Adrenal gland (tissue), 19 donors: ENCODE measurements at regions of chr19 and their contacts with region 1.

Region 1: GRCh38 chr19:46076951-46077816 is 36.4 kb upstream of the IGFL4 start:
- DNase-seq: peak; percentile 56 to 76 (median 71)
- H3K4me3 ChIP-seq: peak overlapping the region in 1 of 4 donors; percentile 36
- H3K27ac ChIP-seq: no peak overlapping the region
- H3K4me1 ChIP-seq: peaks cover 0 to 5% of the 10 kb centered on the region in 2 donors
- H3K27me3 ChIP-seq: peaks cover 33% of the 10 kb centered on the region
- CTCF ChIP-seq: peak; percentile 69 to 93 (median 88)
- POLR2A ChIP-seq: no peak

Region 2: DNA sequence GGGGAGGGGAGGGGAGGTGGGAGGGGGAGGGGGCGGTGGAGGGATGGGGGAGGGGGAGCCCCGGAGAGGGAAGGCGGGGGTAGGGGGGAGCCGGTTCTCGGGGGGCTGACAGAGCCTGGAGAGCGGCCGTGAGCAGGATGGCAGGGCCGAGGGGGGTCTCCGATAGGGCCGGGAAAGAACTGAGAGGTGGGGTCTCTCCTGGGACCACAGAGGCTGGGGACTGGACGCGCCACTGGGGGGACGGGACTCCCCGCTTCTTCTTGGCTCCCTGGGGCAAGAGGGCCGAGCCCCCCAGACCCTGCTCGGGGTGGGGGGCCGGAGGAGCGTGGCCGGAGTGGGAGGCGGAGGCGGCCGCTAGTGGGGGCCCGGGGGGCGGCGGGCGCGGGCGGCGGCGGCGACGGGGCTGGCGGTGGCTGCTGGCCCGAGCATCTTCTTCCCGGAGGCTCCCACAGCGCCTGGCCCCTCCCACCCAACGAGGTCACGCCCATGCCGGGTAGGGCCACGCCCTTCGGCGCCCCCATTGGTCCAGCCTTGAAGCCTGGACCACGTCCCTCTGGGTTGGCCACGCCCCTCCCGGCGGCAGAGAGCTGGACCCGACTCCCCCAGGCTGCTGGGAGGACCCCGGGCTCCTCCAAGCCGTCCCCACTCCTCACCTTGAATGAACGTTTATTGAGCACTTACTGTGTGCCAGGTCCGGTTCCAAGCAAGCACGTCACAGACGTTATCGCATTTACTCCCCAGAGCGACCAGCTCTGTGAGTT is 103.4 kb before region 1 on chr19 and contains the start of gene NOVA2:
- intact Hi-C with region 1: no loop called
- DNase-seq: peak; percentile 58 to 92 (median 67)
- H3K4me3 ChIP-seq: peak within 1 kb of the TSS in 1 of 4 donors; percentile 51
- H3K27ac ChIP-seq: peak within 1 kb of the TSS in 1 of 5 donors; percentile 40
- H3K4me1 ChIP-seq: no peaks in the 10 kb centered on the region
- H3K27me3 ChIP-seq: peaks cover 22% of the 10 kb centered on the region
- CTCF ChIP-seq: no peak
- POLR2A ChIP-seq: no peak
- total RNA-seq, gene NOVA2: 0.54 to 6.7 (median 2.2) TPM

Region 3: GRCh38 chr19:46021531-46022041 is 55.6 kb before region 1 on chr19:
- intact Hi-C with region 1: loop called in 1 of 2 experiments (anchors 10 kb)
- DNase-seq: peak in 1 of 7 donors; percentile 38
- H3K4me3 ChIP-seq: no peak overlapping the region
- H3K27ac ChIP-seq: no peak overlapping the region
- H3K4me1 ChIP-seq: no peaks in the 10 kb centered on the region
- H3K27me3 ChIP-seq: peaks cover 29% of the 10 kb centered on the region
- CTCF ChIP-seq: no peak
- POLR2A ChIP-seq: no peak

Region 4: GRCh38 chr19:46030812-46031550 is 46.2 kb before region 1 on chr19:
- intact Hi-C with region 1: loop called (anchors 5 to 10 kb)
- DNase-seq: no peak
- H3K4me3 ChIP-seq: no peak overlapping the region
- H3K27ac ChIP-seq: no peak overlapping the region
- H3K4me1 ChIP-seq: no peaks in the 10 kb centered on the region
- H3K27me3 ChIP-seq: no peaks in the 10 kb centered on the region
- CTCF ChIP-seq: no peak
- POLR2A ChIP-seq: no peak

Region 5: GRCh38 chr19:46186101-46187100 is 109.2 kb after region 1 on chr19:
- intact Hi-C with region 1: loop called (anchors 5 kb)
- DNase-seq: peak in 2 of 7 donors; percentile 36 to 46
- H3K4me3 ChIP-seq: no peak overlapping the region
- H3K27ac ChIP-seq: no peak overlapping the region
- H3K4me1 ChIP-seq: no peaks in the 10 kb centered on the region
- H3K27me3 ChIP-seq: peaks cover 4% of the 10 kb centered on the region
- CTCF ChIP-seq: no peak
- POLR2A ChIP-seq: no peak

Region 6: GRCh38 chr19:46265217-46265828 is 188.1 kb after region 1 on chr19:
- intact Hi-C with region 1: loop called (anchors 2 to 5 kb)
- DNase-seq: peak; percentile 66 to 86 (median 72)
- H3K4me3 ChIP-seq: no peak overlapping the region
- H3K27ac ChIP-seq: no peak overlapping the region
- H3K4me1 ChIP-seq: no peaks in the 10 kb centered on the region
- H3K27me3 ChIP-seq: peaks cover 13% of the 10 kb centered on the region
- CTCF ChIP-seq: peak; percentile 75 to 98 (median 94)
- POLR2A ChIP-seq: no peak